ENCODE measurements at regions of chr19 and their contacts with region 1.

Region 1: GRCh38 chr19:42244347-42245220 is 2.2 kb upstream of the GSK3A start:
- DNase-seq: peak; percentile 81
- ATAC-seq: peak; percentile 40
- H3K4me3 Mint-ChIP-seq: peak overlapping the region; percentile 99
- H3K27ac Mint-ChIP-seq: peak overlapping the region; percentile 99
- H3K4me1 Mint-ChIP-seq: peaks cover 50% of the 10 kb centered on the region
- H3K27me3 Mint-ChIP-seq: no peaks in the 10 kb centered on the region
- CTCF ChIP-seq: no peak

Region 2: DNA sequence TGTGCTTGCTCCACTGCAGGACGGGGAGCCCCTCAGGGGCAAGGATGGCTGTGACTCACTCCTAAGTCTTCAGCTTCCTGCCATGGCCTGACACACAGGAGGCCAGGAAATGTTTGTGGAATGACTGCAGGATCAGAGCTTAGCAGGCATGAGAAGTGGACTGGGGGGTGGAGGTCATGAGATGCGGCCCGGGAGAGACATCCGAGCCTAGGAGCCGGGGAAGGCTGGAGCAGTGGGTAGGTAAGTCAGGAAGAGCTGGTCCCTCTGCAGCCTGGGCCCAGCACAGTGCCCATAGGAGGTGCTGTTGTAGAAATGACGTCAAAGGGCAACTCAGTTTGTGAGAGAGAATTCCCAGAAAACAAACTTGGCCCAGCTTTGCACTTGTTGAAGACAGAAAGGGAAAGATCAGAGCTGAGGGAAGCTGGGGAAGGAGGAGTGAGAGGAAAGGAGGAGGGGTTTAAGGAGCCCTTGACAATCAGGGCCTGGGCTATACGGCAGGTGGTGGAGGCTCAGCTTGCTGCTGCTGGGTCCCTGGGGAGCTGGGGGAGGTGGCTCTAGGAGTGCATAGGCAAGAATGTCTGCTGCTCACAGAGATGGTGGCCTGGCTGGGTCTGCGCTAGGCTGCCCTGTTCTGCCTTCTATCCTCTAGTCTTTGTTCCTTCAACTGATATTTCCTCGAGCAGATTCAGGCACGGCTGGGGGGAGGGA is 130.8 kb before region 1 on chr19:
- CTCF ChIA-PET with region 1: interaction called, 9 read pairs
- POLR2A ChIA-PET with region 1: interaction called, 10 read pairs
- intact Hi-C with region 1: loop called (anchors 1 kb)
- DNase-seq: peak; percentile 68
- ATAC-seq: peak; percentile 77
- H3K4me3 Mint-ChIP-seq: peak overlapping the region; percentile 83
- H3K27ac Mint-ChIP-seq: peak overlapping the region; percentile 96
- H3K4me1 Mint-ChIP-seq: peaks cover 95% of the 10 kb centered on the region
- H3K27me3 Mint-ChIP-seq: no peaks in the 10 kb centered on the region
- CTCF ChIP-seq: no peak

Region 3: GRCh38 chr19:42199440-42200115 is 45.0 kb before region 1 on chr19:
- CTCF ChIA-PET with region 1: no interaction called
- POLR2A ChIA-PET with region 1: interaction called, 18 read pairs
- intact Hi-C with region 1: loop called (anchors 1 kb)
- DNase-seq: peak; percentile 47
- ATAC-seq: peak; percentile 44
- H3K4me3 Mint-ChIP-seq: peak overlapping the region; percentile 68
- H3K27ac Mint-ChIP-seq: peak overlapping the region; percentile 93
- H3K4me1 Mint-ChIP-seq: peaks cover 87% of the 10 kb centered on the region
- H3K27me3 Mint-ChIP-seq: no peaks in the 10 kb centered on the region
- CTCF ChIP-seq: no peak

Region 4: GRCh38 chr19:42268704-42269477 is 24.3 kb after region 1 on chr19 and contains the start of gene CIC:
- CTCF ChIA-PET with region 1: no interaction called
- POLR2A ChIA-PET with region 1: interaction called, 29 read pairs
- intact Hi-C with region 1: loop called (anchors 1 kb)
- DNase-seq: peak; percentile 95
- ATAC-seq: peak; percentile 81
- H3K4me3 Mint-ChIP-seq: peak within 1 kb of the TSS; percentile 88
- H3K27ac Mint-ChIP-seq: peak within 1 kb of the TSS; percentile 94
- H3K4me1 Mint-ChIP-seq: peaks cover 31% of the 10 kb centered on the region
- H3K27me3 Mint-ChIP-seq: no peaks in the 10 kb centered on the region
- CTCF ChIP-seq: no peak
- total RNA-seq, gene CIC: 85.4 and 96.5 TPM in 2 replicates

Region 5: DNA sequence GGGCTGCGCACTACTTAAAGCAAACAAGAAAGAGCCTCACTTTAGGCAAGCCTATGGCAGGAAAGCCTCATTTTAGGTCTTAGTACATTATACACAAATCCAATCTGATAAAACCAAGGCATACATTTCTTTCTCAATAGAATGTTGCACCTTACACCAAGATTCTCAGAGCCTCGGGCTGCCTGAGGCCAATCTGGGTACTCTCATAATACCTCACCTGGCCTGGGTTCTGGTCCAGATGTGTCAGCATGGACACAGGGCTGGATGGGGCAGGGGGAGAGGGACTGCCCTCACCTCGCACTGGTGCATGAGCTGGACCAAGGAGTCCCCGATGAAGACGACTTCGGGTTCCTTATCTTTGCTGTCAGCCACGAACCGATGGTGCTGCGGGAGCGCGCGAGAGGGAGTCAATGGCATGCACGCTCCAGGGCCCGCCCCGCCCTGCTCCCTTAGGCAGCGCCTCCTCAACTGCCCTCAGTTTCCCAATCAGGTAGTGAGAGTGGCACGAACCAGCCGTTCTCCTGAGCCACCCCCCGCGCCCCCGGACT is 57.1 kb after region 1 on chr19 and contains the start of gene PRR19:
- CTCF ChIA-PET with region 1: interaction called, 5 read pairs
- POLR2A ChIA-PET with region 1: interaction called, 4 read pairs
- intact Hi-C with region 1: loop called (anchors 1 kb)
- DNase-seq: no peak
- ATAC-seq: no peak
- H3K4me3 Mint-ChIP-seq: peak within 1 kb of the TSS; percentile 84
- H3K27ac Mint-ChIP-seq: peak within 1 kb of the TSS; percentile 81
- H3K4me1 Mint-ChIP-seq: peaks cover 25% of the 10 kb centered on the region
- H3K27me3 Mint-ChIP-seq: no peaks in the 10 kb centered on the region
- CTCF ChIP-seq: no peak
- total RNA-seq, gene PRR19: 0.20 and 0.33 TPM in 2 replicates

Region 6: DNA sequence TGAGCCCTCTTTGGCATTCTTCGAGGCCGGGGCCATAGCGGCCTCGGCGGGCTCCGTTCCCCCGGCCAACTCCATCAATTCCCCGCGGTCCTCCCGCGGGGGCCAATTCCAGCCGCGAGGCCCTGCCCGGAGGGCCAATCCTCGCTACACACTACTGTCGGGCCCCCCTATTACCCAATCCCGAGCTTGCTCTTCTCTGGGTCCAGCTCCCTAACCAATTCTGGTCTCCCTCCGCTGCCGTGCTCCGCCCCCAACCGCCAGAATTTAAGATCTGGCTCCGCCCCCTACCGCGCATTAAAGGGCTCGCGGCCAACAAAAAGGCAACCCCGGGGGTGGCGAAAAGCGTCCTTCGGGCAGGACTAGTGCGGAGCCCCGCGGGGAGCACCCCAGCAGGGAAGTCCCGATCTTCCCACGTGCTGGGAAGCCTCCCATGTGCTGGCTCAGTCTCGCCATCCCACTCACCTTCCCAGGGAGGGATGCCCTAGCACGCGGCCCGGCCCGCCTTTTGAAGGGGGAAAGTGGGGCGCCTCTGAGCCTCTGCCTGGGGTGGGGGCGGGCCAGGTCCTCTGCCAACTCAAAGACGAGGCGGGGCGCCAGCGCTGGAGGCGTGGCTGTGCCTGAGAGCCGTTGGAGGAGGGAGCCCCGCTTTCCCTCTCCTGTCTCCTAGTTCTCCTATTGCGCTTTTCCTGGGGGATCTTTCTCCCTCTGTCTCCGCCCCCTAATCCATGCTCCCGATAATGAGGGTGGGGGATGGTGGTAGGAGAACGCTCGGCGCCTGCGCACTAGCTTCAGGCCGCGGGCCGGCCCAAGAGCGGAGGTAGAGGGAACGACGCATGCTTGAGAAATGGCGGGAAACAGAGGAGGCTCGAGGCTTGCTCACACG is 179.1 kb after region 1 on chr19:
- CTCF ChIA-PET with region 1: no interaction called
- POLR2A ChIA-PET with region 1: no interaction called
- intact Hi-C with region 1: loop called (anchors 1 kb)
- DNase-seq: peak; percentile 91
- ATAC-seq: peak; percentile 90
- H3K4me3 Mint-ChIP-seq: peak overlapping the region; percentile 98
- H3K27ac Mint-ChIP-seq: peak overlapping the region; percentile 98
- H3K4me1 Mint-ChIP-seq: peaks cover 46% of the 10 kb centered on the region
- H3K27me3 Mint-ChIP-seq: no peaks in the 10 kb centered on the region
- CTCF ChIP-seq: no peak